Activated CD4-positive, alpha-beta memory T cell treated with anti-CD3 and anti-CD28 coated beads for 36 hours (primary cell): ENCODE measurements at regions of chr22 and their contacts with region 1.

Region 1: DNA sequence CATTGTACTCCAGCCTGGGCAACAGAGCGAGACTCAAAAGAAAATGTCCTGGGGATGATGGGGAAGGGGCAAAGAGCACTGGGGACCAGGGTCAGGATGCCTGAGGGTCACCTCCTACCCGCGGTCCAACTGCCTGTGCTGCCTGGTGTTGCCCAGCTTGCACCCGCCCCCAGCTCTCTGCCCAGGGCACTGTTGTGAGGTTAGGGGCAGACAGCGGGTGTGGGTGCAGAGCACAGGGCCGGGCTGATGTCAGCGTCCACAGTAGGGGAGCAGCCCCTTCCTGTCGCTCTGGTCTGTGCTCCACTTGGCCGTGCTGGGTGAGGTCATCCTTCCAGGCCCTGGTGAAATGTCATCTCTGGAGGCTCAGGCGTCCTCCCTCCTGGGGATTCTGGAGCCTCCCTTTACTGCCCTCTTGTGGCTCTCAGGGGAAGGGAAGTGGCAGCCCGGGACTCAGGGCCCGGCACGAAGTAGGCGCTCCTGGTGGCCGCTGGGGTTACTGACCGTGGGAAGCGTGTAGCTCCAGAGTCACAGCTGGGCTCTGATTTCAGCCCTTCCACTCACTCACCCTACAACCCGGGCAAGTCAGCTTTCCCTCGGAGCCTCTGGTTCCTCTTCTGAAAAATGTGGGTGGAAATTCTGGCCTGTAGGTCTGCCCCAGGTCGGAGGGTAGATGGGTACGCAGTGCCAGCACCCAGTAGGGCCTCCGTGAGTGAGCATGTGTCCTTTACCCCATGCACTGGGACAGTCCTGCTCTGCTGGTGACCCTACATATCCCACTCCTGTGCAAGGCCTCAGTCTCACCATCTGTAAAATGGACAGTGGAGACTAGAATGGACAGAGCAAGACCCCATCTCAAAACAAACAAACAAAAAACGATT is 17.3 kb upstream of the PRR5 start:
- DNase-seq: peak; percentile 94
- H3K4me3 Mint-ChIP-seq: peak overlapping the region; percentile 51
- H3K27ac Mint-ChIP-seq: peak overlapping the region; percentile 84
- H3K4me1 Mint-ChIP-seq: peaks cover 47% of the 10 kb centered on the region
- H3K27me3 Mint-ChIP-seq: no peaks in the 10 kb centered on the region

Region 2: GRCh38 chr22:44180706-44181032 is 504.1 kb before region 1 on chr22 and contains the start of gene PARVG:
- CTCF ChIA-PET with region 1: no interaction called
- POLR2A ChIA-PET with region 1: no interaction called
- intact Hi-C with region 1: loop called (anchors 5 kb)
- DNase-seq: peak; percentile 44
- H3K4me3 Mint-ChIP-seq: peak within 1 kb of the TSS; percentile 86
- H3K27ac Mint-ChIP-seq: peak within 1 kb of the TSS; percentile 89
- H3K4me1 Mint-ChIP-seq: peaks cover 23% of the 10 kb centered on the region
- H3K27me3 Mint-ChIP-seq: no peaks in the 10 kb centered on the region
- total RNA-seq, gene PARVG: 58.5 to 59.5 TPM

Region 3: GRCh38 chr22:44664149-44664548 is 20.6 kb before region 1 on chr22:
- CTCF ChIA-PET with region 1: interaction called, 21 read pairs
- POLR2A ChIA-PET with region 1: interaction called, 4 read pairs
- intact Hi-C with region 1: loop called (anchors 1 kb)
- DNase-seq: peak; percentile 75
- H3K4me3 Mint-ChIP-seq: no peak overlapping the region
- H3K27ac Mint-ChIP-seq: peak overlapping the region; percentile 18
- H3K4me1 Mint-ChIP-seq: peaks cover 32% of the 10 kb centered on the region
- H3K27me3 Mint-ChIP-seq: no peaks in the 10 kb centered on the region

Region 4: DNA sequence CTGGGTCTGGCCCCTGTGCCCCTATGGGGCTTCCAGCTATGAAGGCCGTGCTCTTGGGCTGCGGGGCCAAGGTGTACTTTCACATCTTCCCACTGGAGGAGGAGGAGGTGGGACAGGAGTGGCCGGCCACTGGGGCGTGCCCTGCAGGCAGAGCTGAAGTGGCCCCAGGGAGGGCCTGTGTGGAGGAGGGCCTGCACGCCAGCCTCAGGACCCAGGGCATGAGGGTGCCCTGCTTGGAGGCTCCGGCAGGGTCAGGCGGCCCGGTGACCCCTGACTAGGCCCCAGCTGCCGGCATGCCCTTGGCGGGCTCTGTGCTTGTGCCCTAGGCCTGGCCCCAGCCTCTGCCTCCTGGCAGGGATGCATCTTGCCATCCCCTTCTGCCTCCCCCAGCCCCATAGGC is 22.4 kb after region 1 on chr22:
- CTCF ChIA-PET with region 1: interaction called, 14 read pairs
- POLR2A ChIA-PET with region 1: no interaction called
- intact Hi-C with region 1: no loop called
- DNase-seq: no peak
- H3K4me3 Mint-ChIP-seq: no peak overlapping the region
- H3K27ac Mint-ChIP-seq: no peak overlapping the region
- H3K4me1 Mint-ChIP-seq: peaks cover 21% of the 10 kb centered on the region
- H3K27me3 Mint-ChIP-seq: no peaks in the 10 kb centered on the region

Region 5: GRCh38 chr22:44735540-44736488 is 51.1 kb after region 1 on chr22:
- CTCF ChIA-PET with region 1: interaction called, 12 read pairs
- POLR2A ChIA-PET with region 1: no interaction called
- intact Hi-C with region 1: no loop called
- DNase-seq: peak; percentile 85
- H3K4me3 Mint-ChIP-seq: no peak overlapping the region
- H3K27ac Mint-ChIP-seq: no peak overlapping the region
- H3K4me1 Mint-ChIP-seq: no peaks in the 10 kb centered on the region
- H3K27me3 Mint-ChIP-seq: no peaks in the 10 kb centered on the region